Esophagus muscularis mucosa (tissue), 4 donors: ENCODE measurements at regions of chr9 and their contacts with region 1.

Region 1: DNA sequence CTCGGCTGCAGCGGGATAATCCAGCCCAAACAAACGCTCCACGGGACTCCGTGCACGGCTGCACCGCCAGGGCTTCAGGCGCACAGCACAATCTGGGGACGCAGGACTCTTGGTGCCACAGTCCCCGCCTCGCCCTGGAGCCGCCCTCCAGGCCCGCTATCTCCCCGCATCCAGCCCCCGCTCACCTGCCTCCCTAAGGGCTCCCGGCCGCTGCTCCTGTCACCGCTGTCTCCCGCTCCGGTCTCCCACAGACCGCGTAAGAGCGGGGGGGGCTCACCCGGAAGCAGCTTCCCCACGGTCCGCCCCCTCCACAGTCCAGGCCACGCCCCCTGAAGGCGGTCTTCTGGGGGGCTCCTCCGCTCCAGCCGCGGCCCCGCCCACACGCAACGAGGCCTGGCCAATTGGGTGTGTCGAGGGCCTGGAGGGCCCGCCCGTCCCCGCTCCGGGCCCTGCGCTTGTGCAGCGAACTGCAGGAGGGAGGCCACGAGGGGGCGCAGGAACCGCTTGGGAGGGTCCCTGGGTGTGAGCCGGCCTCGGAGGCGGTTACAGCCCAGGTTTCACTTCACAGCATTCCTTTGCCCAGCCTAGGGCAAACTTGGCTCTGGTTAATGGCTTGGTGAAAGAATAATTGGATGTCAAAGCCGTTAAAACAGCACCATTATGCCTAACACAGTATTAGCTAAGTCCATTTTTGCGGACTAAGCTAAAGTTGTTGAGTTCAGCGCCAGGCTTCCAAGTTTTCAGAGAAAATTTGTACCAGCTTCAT is at the start of gene ALAD:
- DNase-seq: peak; percentile 99
- H3K4me3 ChIP-seq: peak within 1 kb of the TSS; percentile 79 to 95 (median 83)
- H3K27ac ChIP-seq: peak within 1 kb of the TSS; percentile 70 to 82 (median 76)
- H3K4me1 ChIP-seq: peaks cover 26 to 27% (median 27%) of the 10 kb centered on the region in 4 donors
- H3K27me3 ChIP-seq: no peaks in the 10 kb centered on the region
- CTCF ChIP-seq: peak; percentile 87 to 97 (median 94)
- EP300 ChIP-seq: no peak
- POLR2A ChIP-seq: no peak
- total RNA-seq, gene ALAD: 18.2 to 31.1 (median 28.6) TPM

Region 2: DNA sequence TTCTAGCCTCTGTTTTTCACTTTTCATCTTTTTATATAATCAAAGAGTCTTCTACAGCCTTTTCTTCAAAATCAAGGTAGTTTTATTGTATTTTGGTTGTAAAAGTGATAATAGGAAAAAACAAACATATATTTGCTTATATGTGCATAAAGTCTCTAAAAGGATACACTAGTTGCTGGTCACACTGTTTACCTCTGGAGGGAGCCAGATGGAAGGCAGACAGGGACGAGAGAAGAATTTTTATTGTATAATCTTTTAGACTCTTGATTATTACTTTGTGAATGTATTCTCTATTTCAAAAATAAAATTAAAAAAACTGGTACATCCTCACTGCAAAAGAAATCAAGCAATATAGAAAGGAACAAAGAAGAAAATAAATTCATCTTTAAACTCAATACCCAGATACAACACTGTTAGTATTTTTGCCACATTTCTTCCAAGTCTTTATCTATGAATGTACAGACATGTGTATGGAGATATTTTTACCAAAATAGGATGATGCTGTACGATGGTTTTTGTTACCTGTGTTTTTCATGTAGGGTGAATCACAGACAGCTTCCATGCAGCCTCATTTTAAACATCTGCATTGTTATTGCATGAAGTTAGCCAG is 91.9 kb before region 1 on chr9:
- intact Hi-C with region 1: loop called (anchors 10 kb)
- DNase-seq: no peak
- H3K4me3 ChIP-seq: no peak overlapping the region
- H3K27ac ChIP-seq: no peak overlapping the region
- H3K4me1 ChIP-seq: peaks cover 0 to 12% (median 2%) of the 10 kb centered on the region in 4 donors
- H3K27me3 ChIP-seq: no peaks in the 10 kb centered on the region
- CTCF ChIP-seq: peak; percentile 41 to 61 (median 49)
- EP300 ChIP-seq: no peak
- POLR2A ChIP-seq: no peak

Region 3: DNA sequence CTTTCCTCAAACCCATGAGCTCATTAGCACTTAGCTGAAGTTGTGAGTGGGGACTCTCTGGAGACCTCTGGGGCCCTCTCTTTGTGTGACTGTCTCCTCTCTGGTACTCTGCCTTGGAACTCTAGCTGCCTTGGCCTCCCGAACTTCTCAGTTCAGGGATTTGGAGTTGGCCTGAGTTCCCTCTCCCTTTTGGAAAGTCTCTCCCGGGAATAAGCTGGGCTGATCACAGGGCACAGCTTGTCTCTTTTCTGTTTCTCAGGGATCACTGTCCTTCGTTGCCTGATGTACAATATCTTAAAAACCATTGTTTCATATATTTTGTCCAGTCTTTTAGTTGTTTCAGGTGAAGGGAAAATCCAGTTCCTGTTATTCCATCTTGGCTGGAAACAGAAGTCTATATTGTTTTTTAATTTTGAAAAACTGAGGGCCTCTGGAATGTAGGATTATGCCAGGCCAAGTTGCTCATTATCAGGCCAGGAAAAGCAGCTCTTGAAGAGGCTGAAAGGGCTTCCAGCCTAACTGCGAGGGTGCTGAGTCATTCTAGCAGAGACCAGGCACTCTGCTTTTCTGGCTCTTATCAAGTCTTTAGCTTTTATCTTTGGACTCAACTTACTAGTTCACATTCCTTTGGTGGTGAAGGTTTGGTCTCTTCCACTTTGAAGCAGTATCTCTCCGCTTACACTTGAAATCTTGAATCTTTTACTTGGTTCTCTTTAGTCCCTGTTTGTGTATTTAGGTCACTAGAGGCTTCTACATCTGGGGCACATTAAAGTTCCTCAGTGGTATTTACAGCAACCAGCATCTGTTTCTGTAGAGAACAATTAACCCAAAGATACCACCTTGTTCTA is 53.9 kb after region 1 on chr9:
- intact Hi-C with region 1: loop called (anchors 10 kb)
- DNase-seq: peak; percentile 70
- H3K4me3 ChIP-seq: no peak overlapping the region
- H3K27ac ChIP-seq: peak overlapping the region; percentile 80 to 88 (median 86)
- H3K4me1 ChIP-seq: peaks cover 30 to 35% (median 34%) of the 10 kb centered on the region in 4 donors
- H3K27me3 ChIP-seq: no peaks in the 10 kb centered on the region
- CTCF ChIP-seq: no peak
- EP300 ChIP-seq: no peak
- POLR2A ChIP-seq: no peak

Region 4: DNA sequence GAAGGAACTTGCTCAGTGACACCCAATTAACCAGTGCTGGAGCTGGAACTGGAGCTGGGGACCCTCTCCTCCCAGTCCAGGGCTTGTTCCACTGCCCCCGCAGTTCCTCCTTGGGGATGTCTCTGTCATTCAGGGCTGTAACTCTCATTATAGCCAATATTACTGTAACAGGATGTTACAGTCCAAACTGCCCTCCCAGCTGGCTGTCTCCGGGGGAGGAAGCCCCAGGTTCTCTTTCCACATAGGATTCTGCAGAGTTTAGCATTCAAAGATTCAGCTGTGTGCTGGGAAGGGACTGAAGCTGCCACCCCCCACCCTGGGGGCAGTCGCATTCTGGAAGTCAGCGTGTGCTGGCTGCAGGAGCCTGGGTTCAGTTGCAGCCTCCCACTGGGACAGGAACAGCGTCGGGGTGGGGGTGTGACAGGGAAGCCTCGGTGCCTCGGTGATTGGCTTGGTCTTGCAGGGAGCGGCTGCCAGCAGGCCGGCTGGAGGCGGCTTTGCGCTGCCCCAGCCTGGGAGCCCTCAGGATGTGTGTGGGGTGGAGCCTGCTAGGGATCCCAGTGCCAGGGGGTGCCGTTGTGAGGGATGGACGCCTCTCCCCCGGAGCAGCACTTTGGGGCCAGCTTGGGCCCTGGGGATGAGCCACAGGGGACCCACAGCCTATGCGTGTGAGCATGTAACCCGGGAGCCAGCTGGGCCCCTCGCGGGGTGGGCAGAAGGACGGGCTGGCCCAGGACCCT is 163.5 kb after region 1 on chr9:
- intact Hi-C with region 1: no loop called
- DNase-seq: no peak
- H3K4me3 ChIP-seq: peak overlapping the region; percentile 52 to 57 (median 56)
- H3K27ac ChIP-seq: peak overlapping the region; percentile 77 to 92 (median 90)
- H3K4me1 ChIP-seq: peaks cover 77 to 84% (median 78%) of the 10 kb centered on the region in 4 donors
- H3K27me3 ChIP-seq: no peaks in the 10 kb centered on the region
- CTCF ChIP-seq: no peak
- EP300 ChIP-seq: no peak
- POLR2A ChIP-seq: no peak

Region 5: DNA sequence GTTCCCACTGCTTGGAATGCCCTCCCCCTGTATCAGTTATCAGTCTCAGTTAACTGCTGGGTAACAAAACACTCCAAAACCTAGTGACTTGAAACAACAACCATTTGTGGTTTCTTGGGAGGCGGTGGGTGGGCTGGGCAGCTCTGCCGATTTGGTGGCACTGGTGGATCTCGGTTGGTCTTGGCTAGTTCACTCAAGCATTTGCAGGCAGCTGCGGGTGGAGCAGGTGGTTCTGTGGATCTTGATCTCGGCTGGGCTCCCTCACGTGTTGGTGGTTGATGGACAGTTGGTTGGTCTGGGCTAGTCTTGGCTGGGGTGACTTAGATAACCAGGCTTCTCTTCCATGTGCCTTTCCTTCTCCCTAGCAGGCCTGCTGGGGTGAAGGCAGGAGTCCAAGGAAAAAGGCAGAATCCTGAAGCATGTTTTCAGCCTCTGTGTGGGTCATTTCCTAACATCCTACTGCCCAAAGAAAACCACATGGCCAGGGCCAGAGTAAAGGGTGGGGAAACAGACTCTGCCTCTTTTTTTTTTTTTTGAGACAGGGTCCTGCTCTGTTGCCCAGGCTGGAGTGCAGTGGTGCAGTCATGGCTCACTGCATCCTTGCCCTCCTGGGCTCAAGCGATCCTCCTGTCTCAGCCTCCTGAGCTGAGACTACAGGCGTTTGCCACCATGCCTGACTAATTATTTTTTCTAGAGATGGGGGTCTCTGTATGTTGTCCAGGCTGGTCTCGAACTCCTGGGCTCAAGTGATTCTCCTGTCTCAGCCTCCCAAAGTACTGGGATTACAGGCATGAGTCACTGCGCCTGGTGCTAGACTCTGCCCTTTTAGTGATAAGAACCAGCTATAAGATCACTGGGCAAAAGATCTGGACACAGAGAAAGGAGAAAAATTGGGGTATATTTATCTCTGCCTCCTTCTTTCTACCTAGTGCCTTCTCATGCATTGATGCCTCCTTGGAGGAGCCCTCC is 246.0 kb after region 1 on chr9:
- intact Hi-C with region 1: no loop called
- DNase-seq: no peak
- H3K4me3 ChIP-seq: no peak overlapping the region
- H3K27ac ChIP-seq: no peak overlapping the region
- H3K4me1 ChIP-seq: peaks cover 9 to 17% (median 11%) of the 10 kb centered on the region in 4 donors
- H3K27me3 ChIP-seq: no peaks in the 10 kb centered on the region
- CTCF ChIP-seq: no peak
- EP300 ChIP-seq: no peak
- POLR2A ChIP-seq: no peak